ENCODE measurements at regions of chr1 and their contacts with region 1.

Region 1: DNA sequence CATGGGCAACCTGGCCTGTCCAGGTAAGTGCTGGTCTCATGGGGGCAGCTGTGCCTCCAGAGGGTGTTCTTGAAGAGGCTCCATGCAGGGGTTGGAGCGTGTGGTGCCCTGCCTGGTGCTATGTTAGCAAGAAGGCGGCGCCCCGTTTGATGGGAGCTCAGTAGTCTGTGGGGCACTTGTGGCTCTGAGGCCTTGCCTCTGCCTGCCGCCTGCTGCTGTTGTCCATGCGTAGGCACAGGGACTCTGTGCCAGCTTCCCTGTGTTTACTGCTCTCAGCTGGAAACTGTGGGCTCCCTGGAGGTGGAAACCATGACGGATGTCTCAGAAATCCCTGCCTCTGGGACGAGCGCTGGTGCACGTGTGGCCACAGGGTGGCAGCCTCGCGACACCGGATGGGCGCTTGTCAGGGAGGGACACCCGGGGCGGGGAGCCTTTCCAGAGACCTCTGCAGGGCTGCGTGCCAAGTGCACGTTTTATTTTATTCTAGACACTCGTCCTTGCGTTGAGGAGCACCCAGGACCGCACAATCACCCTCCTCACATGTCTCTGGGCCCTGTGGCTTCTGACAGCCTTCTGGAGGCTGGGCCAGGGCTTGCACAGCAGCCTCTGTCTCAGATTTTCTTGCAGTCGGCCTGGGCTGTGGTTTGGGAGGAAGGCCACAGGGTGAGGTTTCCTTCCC is 27.1 kb downstream of the SNAP47 start:
- DNase-seq: peak; percentile 66
- ATAC-seq: peak; percentile 91
- H3K4me3 Mint-ChIP-seq: no peak overlapping the region
- H3K27ac Mint-ChIP-seq: no peak overlapping the region
- H3K4me1 Mint-ChIP-seq: peaks cover 17% of the 10 kb centered on the region
- H3K27me3 Mint-ChIP-seq: no peaks in the 10 kb centered on the region
- CTCF ChIP-seq: peak; percentile 49

Region 2: DNA sequence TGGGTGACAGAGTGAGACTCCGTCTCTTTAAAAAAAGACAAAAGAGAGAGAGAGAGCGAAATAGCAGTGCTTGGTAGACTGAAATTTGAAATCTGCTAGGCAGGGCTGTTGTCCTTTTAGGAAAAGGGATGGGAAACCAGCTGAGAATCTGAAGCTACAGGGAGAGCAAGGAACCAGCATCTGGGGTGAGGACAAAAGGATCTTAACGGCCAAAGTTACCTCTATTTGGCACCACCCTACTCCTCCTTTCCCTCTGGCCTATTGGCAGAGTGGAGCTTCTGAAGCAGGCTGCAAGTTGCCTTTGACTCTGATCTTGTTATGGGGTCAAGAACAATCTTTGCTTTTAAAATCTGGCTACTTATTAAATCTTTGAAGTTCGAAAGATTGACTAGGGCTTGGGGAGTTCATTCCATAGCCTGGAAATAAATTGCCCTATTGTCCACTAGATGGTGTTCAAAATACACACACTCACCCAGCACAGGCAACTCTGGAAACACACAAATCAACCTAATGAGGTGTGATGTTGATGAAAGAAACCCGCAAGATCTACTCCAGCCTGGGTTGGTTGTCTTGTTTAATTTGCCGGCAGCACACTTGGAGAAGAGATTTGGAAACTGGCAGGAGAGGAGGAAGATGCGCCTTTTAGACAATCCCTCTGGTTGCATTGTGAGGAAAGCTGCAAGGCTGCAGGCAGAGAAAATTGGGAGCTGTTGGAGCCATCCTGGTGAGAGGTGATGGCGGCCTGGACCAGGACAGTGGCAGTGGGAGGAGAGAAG is 1338.0 kb before region 1 on chr1:
- CTCF ChIA-PET with region 1: no interaction called
- POLR2A ChIA-PET with region 1: no interaction called
- intact Hi-C with region 1: no loop called
- DNase-seq: no peak
- ATAC-seq: peak; percentile 53
- H3K4me3 Mint-ChIP-seq: no peak overlapping the region
- H3K27ac Mint-ChIP-seq: peak overlapping the region; percentile 35
- H3K4me1 Mint-ChIP-seq: peaks cover 21% of the 10 kb centered on the region
- H3K27me3 Mint-ChIP-seq: no peaks in the 10 kb centered on the region
- CTCF ChIP-seq: no peak

Region 3: GRCh38 chr1:227934476-227935313 is 172.3 kb after region 1 on chr1:
- CTCF ChIA-PET with region 1: no interaction called
- POLR2A ChIA-PET with region 1: no interaction called
- intact Hi-C with region 1: no loop called
- DNase-seq: no peak
- ATAC-seq: peak; percentile 28
- H3K4me3 Mint-ChIP-seq: no peak overlapping the region
- H3K27ac Mint-ChIP-seq: no peak overlapping the region
- H3K4me1 Mint-ChIP-seq: no peaks in the 10 kb centered on the region
- H3K27me3 Mint-ChIP-seq: peaks cover 11% of the 10 kb centered on the region
- CTCF ChIP-seq: no peak

Region 4: DNA sequence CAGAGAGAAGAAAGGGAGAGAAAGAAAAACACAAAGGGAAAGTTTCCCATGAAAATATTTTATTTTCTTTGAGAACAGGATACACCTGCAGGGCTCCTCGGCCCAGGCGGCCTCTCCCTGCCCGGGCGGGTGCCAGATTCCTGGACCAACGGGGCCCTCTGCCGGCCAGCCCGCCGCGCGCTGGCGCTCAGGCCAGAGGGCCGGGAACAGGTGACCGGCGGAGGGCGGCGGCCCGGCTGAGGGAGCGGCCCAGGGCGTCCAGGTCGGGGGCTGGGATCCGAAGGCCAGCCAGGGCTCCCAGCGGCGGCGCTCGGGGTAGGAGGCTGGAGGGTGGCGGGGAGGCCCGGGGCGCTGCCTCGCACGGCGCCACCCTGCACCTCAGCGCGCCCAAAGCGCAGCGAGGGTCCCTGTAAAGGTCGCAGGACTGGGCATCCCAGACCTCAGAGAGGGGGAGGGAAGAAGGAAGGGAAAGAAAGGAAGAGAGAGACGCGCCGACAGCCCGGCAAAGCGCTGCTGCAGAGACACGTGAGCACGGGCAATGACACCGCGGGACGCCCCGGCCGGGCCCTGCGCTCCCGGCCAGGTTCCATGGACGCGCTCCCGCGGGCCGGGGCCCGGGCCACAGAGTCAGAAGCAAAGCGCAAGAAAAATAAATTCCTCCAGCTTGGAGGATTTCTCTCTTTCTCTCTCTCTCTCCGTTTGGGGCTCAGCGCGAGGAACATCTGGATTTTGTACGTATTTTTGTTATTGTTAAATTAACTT is 184.4 kb after region 1 on chr1:
- CTCF ChIA-PET with region 1: interaction called, 3 read pairs
- POLR2A ChIA-PET with region 1: no interaction called
- intact Hi-C with region 1: loop called (anchors 1 kb)
- DNase-seq: peak; percentile 32
- ATAC-seq: peak; percentile 62
- H3K4me3 Mint-ChIP-seq: peak overlapping the region; percentile 59
- H3K27ac Mint-ChIP-seq: no peak overlapping the region
- H3K4me1 Mint-ChIP-seq: peaks cover 9% of the 10 kb centered on the region
- H3K27me3 Mint-ChIP-seq: peaks cover 25% of the 10 kb centered on the region
- CTCF ChIP-seq: no peak

Region 5: DNA sequence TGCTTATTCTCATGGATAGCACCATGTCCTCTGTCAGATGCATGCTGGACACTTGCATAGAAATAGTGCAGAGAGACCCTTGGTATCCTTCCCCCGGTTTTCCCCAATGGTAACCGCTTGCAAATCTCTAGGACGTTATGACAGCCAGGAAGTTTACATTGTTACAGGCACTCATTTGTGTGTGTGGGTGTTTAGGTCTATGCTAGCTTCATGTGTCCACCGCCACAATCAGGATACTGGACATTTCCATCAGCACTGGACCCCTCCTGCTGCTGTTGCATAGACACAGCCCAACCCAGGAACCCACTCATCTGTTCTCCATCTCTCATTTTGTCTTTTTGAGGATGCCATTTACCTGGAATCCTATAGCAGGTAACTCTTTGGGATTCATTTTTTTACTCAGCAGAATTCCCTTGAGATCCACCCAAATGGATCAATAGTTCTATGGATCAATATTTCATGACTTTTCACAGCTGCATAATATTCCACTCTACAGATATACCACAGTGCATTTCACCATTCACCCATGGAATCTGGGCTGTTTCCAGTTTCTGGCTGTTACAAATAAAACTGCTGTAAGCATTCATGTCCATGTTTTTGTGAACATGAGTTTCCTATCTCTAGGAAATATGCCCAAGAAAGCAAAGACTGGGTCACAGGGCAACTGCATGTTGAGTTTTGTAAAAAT is 191.9 kb after region 1 on chr1:
- CTCF ChIA-PET with region 1: interaction called, 20 read pairs
- POLR2A ChIA-PET with region 1: no interaction called
- intact Hi-C with region 1: loop called (anchors 1 kb)
- DNase-seq: no peak
- ATAC-seq: no peak
- H3K4me3 Mint-ChIP-seq: no peak overlapping the region
- H3K27ac Mint-ChIP-seq: no peak overlapping the region
- H3K4me1 Mint-ChIP-seq: no peaks in the 10 kb centered on the region
- H3K27me3 Mint-ChIP-seq: peaks cover 30% of the 10 kb centered on the region
- CTCF ChIP-seq: no peak